Spleen (tissue), 13 donors: ENCODE measurements at regions of chr9 and their contacts with region 1.

Region 1: DNA sequence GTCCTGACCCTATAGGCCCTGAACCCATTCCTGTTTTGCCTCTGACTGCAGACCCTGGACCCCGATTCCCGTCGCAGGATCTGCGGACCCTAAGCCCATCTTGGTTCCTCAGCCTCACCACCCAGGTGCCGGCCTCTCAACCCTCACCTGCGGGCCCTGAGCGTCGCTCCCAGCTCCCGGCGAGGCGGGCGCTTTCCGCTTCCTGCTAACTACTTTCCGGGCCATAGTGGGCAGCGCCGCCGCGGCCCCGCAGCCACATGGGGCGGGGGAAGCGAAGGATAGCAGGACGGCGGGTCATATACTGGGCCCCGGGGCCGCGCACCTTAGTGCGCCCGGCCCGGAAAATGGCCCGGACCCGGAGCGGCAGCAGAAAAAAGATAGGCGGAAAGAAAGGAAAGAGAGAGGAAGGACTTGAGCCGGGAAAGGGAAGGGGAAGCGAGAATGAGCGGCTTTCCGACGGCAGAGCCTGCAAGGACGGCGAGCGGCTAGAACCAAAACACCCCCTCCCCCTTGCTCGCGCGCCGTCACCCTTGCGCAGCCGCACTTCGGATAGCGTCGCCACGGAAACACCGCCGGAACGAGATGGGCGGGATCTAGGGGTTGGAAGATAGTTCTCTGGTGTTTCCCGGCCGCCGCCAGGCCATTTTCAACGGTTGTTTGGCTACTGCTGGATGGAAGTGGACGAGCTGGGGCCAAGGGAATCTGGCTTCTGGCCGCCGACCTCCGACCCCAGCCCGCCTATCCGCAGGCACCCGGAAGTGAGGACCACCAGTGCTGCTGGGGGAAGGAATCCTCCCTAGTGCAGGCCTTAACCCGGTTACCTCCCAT is at the start of gene DCAF12:
- DNase-seq: peak; percentile 96
- H3K4me3 ChIP-seq: peak within 1 kb of the TSS; percentile 68 to 90 (median 86)
- H3K27ac ChIP-seq: peak within 1 kb of the TSS; percentile 85 to 98 (median 92)
- H3K4me1 ChIP-seq: peaks cover 36 to 62% (median 52%) of the 10 kb centered on the region in 6 donors
- H3K27me3 ChIP-seq: peaks cover 0 to 78% (median 11%) of the 10 kb centered on the region in 7 donors
- CTCF ChIP-seq: peak in 3 of 11 experiments; percentile 5 to 24 (median 16)
- POLR2A ChIP-seq: peak in 2 of 3 donors; percentile 25 to 36
- total RNA-seq, gene DCAF12: 36.5 to 107 (median 38.6) TPM

Region 2: DNA sequence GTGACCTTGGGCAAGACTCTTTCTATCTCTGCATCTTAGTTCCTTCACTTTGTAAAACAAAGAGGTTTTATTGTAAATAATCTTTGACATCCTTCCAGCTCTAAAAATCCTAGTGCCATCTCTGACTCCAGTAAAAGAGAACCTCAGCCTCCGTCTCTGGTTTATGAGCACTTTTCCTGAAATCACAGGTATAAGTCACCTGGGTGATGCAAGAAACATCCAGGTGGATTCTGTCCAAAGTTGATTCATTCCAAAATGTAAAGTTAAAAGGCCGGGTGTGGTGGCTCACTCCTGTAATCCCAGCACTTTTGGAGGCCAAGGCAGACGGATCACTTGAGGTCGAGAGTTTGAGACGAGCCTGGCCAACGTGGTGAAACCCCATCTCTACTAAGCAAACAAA is 56.6 kb before region 1 on chr9:
- intact Hi-C with region 1: no loop called
- DNase-seq: no peak
- H3K4me3 ChIP-seq: no peak overlapping the region
- H3K27ac ChIP-seq: no peak overlapping the region
- H3K4me1 ChIP-seq: no peaks in the 10 kb centered on the region
- H3K27me3 ChIP-seq: peaks cover 0 to under 1% (median 0%) of the 10 kb centered on the region in 7 donors
- CTCF ChIP-seq: no peak
- POLR2A ChIP-seq: no peak

Region 3: GRCh38 chr9:34178520-34179212 is 52.2 kb after region 1 on chr9 and contains the start of gene UBAP1:
- intact Hi-C with region 1: loop called (anchors 10 kb)
- DNase-seq: peak; percentile 98
- H3K4me3 ChIP-seq: peak within 1 kb of the TSS; percentile 53 to 87 (median 64)
- H3K27ac ChIP-seq: peak within 1 kb of the TSS; percentile 66 to 98 (median 94)
- H3K4me1 ChIP-seq: peaks cover 7 to 62% (median 33%) of the 10 kb centered on the region in 6 donors
- H3K27me3 ChIP-seq: peaks cover 0 to 4% (median 0%) of the 10 kb centered on the region in 7 donors
- CTCF ChIP-seq: peak in 6 of 11 experiments; percentile 7 to 56 (median 34)
- POLR2A ChIP-seq: peak in 1 of 3 donors; percentile 66
- total RNA-seq, gene UBAP1: 37.4 to 56.0 (median 44.9) TPM

Region 4: DNA sequence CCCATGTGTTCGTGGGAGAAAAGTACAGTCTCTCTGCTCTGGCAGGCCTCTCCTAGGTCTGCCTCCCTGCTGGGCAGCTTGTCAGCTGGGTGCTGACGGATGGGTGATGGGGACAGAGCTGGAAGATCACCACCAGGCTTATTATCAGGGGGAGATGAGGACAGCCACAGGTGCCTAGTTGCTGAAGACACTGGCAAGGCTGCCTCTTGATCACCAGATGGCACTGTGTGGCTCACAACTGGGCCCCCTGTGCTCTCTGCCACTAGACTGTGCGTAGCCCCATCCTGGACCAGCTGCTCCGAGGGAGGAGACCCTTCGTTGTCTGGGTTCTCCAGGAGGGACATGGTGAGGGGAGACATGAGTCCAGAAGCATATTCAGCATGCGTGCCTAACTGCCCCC is 129.7 kb after region 1 on chr9:
- intact Hi-C with region 1: no loop called
- DNase-seq: no peak
- H3K4me3 ChIP-seq: no peak overlapping the region
- H3K27ac ChIP-seq: no peak overlapping the region
- H3K4me1 ChIP-seq: peaks cover 0 to 15% (median 6%) of the 10 kb centered on the region in 6 donors
- H3K27me3 ChIP-seq: no peaks in the 10 kb centered on the region
- CTCF ChIP-seq: peak in 1 of 11 experiments; percentile 27
- POLR2A ChIP-seq: no peak

Region 5: DNA sequence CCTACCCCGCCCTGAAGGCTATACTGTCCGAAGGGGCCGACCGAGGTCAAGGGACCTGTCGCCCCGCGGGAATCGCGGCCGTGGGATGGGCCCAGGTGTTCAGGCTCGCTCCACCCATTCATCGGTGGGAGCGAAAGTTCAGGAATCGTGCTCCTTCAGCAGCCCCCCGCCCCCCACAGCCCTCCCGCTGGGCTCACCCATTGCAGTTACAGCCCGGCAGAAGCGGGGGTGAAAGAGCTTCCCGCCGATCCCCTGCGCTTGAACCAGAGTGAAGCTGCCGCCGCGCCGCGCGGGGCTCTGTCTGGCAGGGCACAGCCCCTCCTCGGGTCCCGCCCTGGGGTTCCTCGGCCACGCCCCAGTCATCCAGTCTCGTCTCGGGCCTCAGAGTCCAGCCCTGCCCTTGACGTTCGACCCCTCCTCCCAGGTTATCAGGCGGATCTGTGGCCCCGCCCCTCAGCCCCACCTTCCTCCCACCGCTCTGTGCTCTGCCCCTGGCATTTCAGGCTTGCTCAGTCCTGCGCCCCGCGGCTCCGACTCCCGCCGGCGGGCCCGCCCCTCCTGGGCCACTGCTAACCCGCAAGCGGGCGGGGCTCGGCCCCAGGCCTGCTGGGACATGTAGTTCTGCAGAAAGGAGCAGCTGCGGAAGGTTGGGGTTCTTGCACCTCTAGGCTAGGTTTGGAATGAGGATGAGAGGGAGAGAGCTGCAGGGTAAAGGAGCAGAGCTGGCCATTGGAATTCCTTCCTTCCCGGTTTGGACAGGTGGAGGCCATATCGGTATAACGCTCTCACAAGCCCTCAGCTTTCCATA is 250.4 kb after region 1 on chr9 and contains the start of gene MYORG:
- intact Hi-C with region 1: no loop called
- DNase-seq: peak; percentile 98
- H3K4me3 ChIP-seq: peak within 1 kb of the TSS; percentile 51 to 92 (median 72)
- H3K27ac ChIP-seq: peak within 1 kb of the TSS in 6 of 8 donors; percentile 14 to 78 (median 70)
- H3K4me1 ChIP-seq: peaks cover 29 to 61% (median 48%) of the 10 kb centered on the region in 6 donors
- H3K27me3 ChIP-seq: peaks cover 0 to 24% (median 0%) of the 10 kb centered on the region in 7 donors
- CTCF ChIP-seq: peak in 2 of 11 experiments; percentile 24 to 30
- POLR2A ChIP-seq: no peak
- total RNA-seq, gene MYORG: 0.97 to 2.2 (median 1.5) TPM

Region 6: GRCh38 chr9:34454571-34455065 is 328.2 kb after region 1 on chr9:
- intact Hi-C with region 1: no loop called
- DNase-seq: no peak
- H3K4me3 ChIP-seq: no peak overlapping the region
- H3K27ac ChIP-seq: no peak overlapping the region
- H3K4me1 ChIP-seq: peaks cover 14 to 59% (median 36%) of the 10 kb centered on the region in 6 donors
- H3K27me3 ChIP-seq: no peaks in the 10 kb centered on the region
- CTCF ChIP-seq: no peak
- POLR2A ChIP-seq: no peak